OCI-LY7 (cell line): ENCODE measurements at regions of chr5 and their contacts with region 1.

Region 1: DNA sequence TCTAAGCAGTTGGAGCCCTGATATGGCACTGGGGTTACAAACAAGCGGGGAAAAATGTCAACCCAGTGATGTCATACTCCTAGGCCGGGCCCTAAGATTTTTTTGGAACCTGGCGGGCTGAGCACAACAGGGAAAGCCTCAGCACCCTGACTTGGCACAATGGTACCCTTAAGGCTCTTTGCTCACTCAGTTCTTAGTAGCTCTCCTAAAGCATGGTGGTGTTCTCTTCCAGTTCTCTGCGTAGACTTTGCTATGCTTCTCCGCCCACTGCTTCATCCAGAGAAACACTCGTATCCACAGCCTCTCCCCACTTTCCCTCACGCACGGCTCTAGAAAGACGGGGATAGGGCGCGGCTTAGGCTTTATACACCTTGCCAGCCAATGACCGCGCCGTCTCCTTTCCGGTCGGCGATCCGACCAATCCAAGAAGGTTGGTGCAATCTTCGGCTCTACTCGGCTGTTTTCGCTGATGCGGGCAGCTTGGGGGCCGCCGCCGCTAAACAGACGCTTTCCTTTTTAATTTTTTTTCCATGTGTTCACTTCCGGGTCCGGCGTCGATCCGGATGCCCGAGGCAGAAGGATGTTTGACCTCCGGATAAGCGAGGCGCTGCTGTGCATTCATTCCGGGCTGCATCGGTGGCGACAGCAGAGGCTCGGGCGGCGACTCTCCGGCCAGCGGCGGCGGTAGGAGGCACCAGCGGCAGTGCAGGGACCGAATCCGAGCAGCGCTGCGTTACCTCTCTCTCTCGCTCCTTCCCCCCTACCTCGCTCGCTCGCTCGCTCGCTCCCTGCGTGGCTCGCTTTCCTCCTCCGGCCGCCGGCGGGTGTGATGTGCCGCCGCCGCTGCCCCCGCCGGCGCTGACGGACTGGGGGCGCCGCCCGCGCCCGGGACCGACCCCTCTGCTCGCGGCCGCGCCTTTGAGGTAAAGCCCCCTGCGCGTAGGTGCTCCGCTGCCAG is at the start of gene CSNK1G3:
- DNase-seq: peak; percentile 96
- H3K4me3 ChIP-seq: peak within 1 kb of the TSS; percentile 86
- H3K27ac ChIP-seq: peak within 1 kb of the TSS; percentile 59
- H3K4me1 ChIP-seq: peaks cover 7% of the 10 kb centered on the region
- CTCF ChIP-seq: no peak
- total RNA-seq, gene CSNK1G3: 21.0 and 23.1 TPM in 2 replicates

Region 2: GRCh38 chr5:122774861-122775549 is 736.9 kb before region 1 on chr5 and contains the start of gene SNX2:
- CTCF ChIA-PET with region 1: no interaction called
- POLR2A ChIA-PET with region 1: no interaction called
- intact Hi-C with region 1: loop called (anchors 5 kb)
- DNase-seq: peak; percentile 91
- H3K4me3 ChIP-seq: peak within 1 kb of the TSS; percentile 88
- H3K27ac ChIP-seq: peak within 1 kb of the TSS; percentile 57
- H3K4me1 ChIP-seq: peaks cover 21% of the 10 kb centered on the region
- CTCF ChIP-seq: no peak
- total RNA-seq, gene SNX2: 46.0 and 47.1 TPM in 2 replicates

Region 3: GRCh38 chr5:123244458-123244857 is 267.5 kb before region 1 on chr5:
- CTCF ChIA-PET with region 1: no interaction called
- POLR2A ChIA-PET with region 1: no interaction called
- intact Hi-C with region 1: no loop called
- DNase-seq: no peak
- H3K4me3 ChIP-seq: no peak overlapping the region
- H3K27ac ChIP-seq: no peak overlapping the region
- H3K4me1 ChIP-seq: no peaks in the 10 kb centered on the region
- CTCF ChIP-seq: no peak

Region 4: DNA sequence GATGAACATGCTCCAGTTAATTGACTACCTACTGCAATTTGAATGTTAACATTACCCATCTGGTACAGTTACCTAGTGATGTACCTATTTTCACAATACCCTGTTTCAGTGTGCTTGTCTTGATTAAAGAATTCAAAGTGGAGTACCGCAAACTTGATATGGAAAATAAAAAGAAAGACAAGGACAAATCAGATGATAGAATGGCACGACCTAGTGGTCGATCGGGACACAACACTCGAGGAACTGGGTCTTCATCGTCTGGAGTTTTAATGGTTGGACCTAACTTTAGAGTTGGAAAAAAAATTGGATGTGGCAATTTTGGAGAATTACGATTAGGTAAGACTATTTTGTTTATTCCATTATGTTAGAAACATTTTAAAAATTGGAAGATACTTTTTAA is 33.6 kb after region 1 on chr5:
- CTCF ChIA-PET with region 1: no interaction called
- POLR2A ChIA-PET with region 1: interaction called, 4 read pairs
- intact Hi-C with region 1: loop called (anchors 2 kb)
- DNase-seq: peak; percentile 53
- H3K4me3 ChIP-seq: no peak overlapping the region
- H3K27ac ChIP-seq: no peak overlapping the region
- H3K4me1 ChIP-seq: peaks cover 21% of the 10 kb centered on the region
- CTCF ChIP-seq: peak; percentile 92